ENCODE measurements at regions of chr12 and their contacts with region 1.

Region 1: DNA sequence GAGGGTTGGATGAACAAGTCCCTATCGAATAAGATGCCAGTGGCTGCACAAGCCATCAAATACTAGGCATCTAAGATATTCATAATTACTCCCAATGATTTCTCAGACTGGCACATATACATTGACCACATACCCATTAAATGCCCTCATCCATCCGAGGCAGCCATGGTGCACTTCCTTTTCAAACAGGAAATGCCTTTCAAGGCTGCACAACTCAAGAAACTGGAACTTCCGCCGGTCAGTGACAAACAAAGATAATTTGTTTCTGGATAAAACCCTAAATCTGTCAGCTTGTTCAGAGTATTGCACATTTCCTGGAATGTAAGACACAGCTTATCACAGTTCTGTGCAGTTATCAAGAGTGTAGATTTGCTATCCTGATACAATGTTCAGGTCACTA is 203.7 kb downstream of the RMST start:
- DNase-seq: no peak
- H3K4me3 ChIP-seq: no peak overlapping the region
- H3K27ac ChIP-seq: no peak overlapping the region
- H3K4me1 ChIP-seq: no peaks in the 10 kb centered on the region
- H3K27me3 ChIP-seq: no peaks in the 10 kb centered on the region
- CTCF ChIP-seq: no peak

Region 2: DNA sequence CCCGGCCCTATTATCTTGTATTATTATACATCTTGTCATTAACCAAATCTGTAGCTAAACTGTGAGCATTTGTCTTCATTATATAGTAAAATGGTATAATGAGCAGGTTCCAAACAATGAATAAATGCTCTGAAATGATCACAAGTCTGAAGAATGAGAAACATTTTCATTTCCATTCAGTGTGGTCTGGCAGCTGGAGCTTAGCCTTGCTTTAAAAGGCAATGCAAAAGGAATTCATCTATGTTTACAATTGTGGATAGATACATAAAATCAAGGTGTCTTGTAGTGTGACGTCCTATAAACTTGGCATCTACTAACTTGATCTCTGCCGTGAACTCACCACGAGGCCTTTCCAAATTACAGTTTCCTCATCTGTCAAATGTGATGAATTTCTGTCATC is 35.4 kb before region 1 on chr12:
- CTCF ChIA-PET with region 1: no interaction called
- POLR2A ChIA-PET with region 1: interaction called, 15 read pairs
- intact Hi-C with region 1: no loop called
- DNase-seq: no peak
- H3K4me3 ChIP-seq: no peak overlapping the region
- H3K27ac ChIP-seq: no peak overlapping the region
- H3K4me1 ChIP-seq: no peaks in the 10 kb centered on the region
- H3K27me3 ChIP-seq: peaks cover 11% of the 10 kb centered on the region
- CTCF ChIP-seq: no peak